ENCODE measurements at regions of chr2 and their contacts with region 1.

Region 1: DNA sequence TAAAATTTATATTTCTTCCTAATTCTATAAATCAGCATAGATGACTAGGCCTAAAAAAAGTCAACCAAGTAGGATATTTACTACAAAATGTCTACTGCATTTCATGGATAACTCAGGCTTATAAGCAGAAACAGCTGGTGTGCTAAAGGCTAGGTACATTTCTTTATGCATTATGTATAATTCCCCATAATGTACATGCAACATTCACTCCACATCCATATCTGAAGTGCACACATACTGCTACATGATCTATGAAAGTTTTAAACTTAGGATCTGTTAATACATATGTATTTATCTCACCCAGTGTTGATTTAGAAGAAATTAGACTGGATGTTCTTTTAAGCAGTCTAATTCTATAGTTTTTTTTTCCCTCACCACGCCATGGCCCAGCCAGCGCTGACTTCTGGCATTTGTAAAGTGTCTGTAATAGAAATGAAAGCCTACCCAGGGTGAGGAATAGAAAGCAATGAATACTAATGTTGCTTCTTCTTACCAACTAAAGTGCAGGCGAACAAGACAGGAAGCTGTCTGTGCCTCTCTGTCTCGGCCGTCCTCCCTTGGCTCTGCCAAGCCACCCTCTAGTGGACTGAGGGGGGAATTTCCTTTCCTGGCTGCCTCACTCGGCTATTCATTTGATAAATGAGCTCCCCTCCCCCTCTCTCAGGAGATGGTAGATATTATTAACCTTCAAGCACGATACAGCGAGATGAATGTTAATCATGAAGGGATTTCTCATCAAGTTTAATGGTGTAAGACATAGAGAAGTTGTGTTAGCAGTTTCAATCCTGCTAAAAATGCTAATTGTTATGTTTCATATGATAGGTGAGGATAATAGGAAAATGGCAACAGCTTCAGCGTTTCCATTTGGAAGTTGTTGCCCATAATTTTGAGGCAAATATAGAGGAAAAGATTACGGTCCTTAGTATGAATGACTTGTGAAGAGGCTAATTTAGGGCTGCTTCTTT is 384.5 kb downstream of the MTX2 start:
- DNase-seq: no peak
- CTCF ChIP-seq: peak; percentile 35

Region 2: GRCh38 chr2:176126929-176127773 is 526.6 kb before region 1 on chr2:
- CTCF ChIA-PET with region 1: interaction called, 57 read pairs
- POLR2A ChIA-PET with region 1: no interaction called
- DNase-seq: peak; percentile 50
- CTCF ChIP-seq: peak; percentile 79

Region 3: DNA sequence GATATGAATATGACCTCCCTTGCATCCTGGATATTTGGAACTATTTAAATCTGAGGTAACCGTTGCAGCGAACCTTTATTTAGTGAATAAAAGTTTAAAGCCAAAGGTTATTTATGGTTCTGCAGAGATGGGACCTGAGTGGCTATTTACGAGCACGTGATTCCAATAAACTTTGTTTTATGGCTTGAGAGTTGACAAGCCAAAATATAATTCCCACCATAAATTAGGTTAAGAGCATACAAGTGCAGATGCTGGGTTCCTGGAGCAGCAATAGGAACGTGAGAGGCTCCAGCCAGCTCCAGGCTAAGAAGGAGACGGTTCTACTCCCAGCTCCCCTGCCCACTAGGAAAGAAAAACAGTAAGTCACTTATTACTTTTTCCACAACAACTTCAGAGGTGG is 507.7 kb before region 1 on chr2:
- CTCF ChIA-PET with region 1: interaction called, 39 read pairs
- POLR2A ChIA-PET with region 1: no interaction called
- DNase-seq: no peak
- CTCF ChIP-seq: no peak

Region 4: DNA sequence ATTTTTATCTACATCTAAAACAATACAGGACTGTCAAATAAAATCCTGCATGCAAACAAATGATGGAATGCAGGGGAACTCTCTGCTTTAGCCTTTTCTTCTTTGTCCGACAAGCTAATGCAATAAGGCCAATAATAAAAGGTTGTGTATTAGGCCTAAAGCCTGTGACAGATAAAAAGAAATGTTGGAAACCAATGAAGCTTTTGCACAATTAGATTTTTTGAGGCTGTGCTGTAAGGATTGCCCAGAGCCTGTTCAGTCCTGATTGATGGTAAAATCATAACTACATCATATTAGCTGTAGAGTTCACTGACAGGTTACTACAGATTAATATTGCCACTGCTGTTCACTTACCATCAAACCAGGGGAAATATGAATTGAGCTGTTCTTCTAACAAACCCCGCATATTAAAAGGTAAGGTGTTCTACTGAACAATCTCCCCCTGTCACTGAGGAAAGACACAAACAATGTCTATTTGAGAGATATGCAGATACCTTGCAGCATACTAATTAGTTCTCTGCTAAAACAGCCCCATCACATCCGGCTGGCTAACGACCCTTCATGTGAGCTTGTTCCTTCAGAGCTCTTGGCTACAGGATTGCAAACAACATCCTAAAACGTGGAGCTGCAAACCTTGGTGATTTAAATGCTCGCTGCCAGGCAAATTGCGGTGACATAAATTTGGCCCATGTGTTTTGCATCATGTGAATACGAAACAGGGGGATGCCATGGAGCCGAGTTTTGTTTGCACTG is 79.1 kb before region 1 on chr2:
- CTCF ChIA-PET with region 1: no interaction called
- POLR2A ChIA-PET with region 1: no interaction called
- DNase-seq: no peak
- CTCF ChIP-seq: no peak

Region 5: GRCh38 chr2:176638167-176639015 is 15.4 kb before region 1 on chr2:
- CTCF ChIA-PET with region 1: interaction called, 70 read pairs
- POLR2A ChIA-PET with region 1: no interaction called
- DNase-seq: peak; percentile 83
- CTCF ChIP-seq: peak; percentile 89

Region 6: GRCh38 chr2:176664478-176664877 is 10.7 kb after region 1 on chr2:
- CTCF ChIA-PET with region 1: interaction called, 48 read pairs
- POLR2A ChIA-PET with region 1: no interaction called
- DNase-seq: no peak
- CTCF ChIP-seq: no peak

Region 7: GRCh38 chr2:176680916-176681516 is 27.3 kb after region 1 on chr2:
- CTCF ChIA-PET with region 1: interaction called, 13 read pairs
- POLR2A ChIA-PET with region 1: no interaction called
- DNase-seq: no peak
- CTCF ChIP-seq: no peak

Region 8: GRCh38 chr2:177148477-177149154 is 494.9 kb after region 1 on chr2:
- CTCF ChIA-PET with region 1: interaction called, 35 read pairs
- POLR2A ChIA-PET with region 1: no interaction called
- DNase-seq: peak; percentile 57
- CTCF ChIP-seq: peak; percentile 93

Measured in GM10248 (cell line).